OCI-LY7 (cell line): ENCODE measurements at regions of chr3 and their contacts with region 1.

Region 1: DNA sequence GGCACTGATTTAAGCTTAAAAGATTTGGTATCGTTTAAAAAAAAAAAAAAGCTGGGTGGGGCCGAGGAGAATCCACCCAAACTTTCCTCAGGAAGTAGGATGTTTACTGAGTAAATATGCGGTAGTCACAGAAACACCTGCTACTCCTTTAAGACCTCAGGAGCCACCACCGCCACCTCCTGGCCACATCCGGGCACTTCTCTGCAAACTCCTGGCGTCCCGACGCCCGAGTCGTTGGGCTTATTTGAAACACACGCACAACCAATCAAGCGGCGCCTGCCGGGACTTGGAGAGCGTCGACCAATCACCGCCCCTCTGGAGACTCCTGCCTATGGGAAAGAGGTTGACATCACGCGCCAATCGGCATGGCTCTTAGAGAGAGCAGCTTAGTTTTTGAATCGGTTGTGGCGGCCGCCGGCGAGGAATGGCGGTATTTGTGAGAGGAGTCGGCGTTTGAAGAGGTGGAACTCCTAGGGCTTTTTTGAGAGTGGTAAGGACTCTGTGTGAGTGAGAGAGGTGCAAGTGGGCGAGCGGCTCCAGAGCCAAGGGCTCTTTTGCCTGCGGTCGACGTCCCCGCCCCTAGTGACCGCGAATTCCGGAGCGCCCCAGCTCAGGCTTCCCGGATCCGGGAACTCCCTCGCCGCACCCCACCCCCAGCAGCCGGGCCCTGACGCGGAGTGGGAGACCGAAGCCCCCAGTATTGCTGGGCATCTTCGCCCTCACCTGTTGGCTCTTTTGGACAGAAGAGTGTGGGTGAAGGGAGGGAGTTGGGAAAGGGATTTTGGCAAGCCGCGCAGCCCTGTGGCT is at the start of gene ECT2:
- DNase-seq: peak; percentile 100
- H3K4me3 ChIP-seq: peak within 1 kb of the TSS; percentile 94
- H3K27ac ChIP-seq: peak within 1 kb of the TSS; percentile 82
- H3K4me1 ChIP-seq: peaks cover 24% of the 10 kb centered on the region
- CTCF ChIP-seq: peak; percentile 78
- total RNA-seq, gene ECT2: 48.1 and 51.5 TPM in 2 replicates

Region 2: DNA sequence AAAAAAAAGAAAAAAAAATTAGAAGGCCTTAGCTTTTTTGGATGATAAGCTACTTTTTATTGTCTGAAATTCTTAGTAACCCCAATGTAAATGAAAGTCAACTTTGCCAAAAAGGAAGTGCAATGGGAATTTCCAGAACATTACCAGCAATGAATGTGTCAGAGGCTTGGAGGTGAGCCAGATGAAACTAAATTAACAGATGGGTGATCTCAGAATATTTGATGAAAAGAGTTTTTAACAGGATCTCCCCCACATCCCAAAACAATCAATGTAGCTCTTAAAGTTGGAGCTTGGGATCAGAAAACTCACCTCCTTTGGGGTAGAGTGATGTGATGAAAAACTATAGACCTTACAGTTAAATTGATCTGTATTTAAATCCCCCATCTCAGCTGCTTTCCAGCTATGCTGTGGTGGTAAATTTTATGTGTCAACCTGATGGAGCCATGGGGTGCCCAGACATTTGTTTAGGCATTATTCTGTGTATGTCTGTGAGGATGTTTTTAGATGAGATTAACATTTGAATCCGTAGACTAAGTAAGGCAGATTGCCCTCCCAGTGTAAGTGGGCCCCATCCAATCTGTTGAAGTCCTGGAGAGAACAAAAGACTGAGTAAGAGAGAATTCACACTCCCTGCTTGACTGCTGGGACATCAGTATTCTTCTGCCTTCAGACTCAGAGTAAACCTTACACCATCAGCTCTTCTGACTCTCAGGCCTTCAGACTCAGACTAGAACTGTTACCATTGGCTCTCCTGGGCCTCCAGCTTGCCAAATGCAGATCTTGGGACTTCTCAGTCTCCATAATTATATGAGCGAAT is 143.1 kb before region 1 on chr3:
- CTCF ChIA-PET with region 1: no interaction called
- POLR2A ChIA-PET with region 1: no interaction called
- intact Hi-C with region 1: no loop called
- DNase-seq: no peak
- H3K4me3 ChIP-seq: no peak overlapping the region
- H3K27ac ChIP-seq: no peak overlapping the region
- H3K4me1 ChIP-seq: no peaks in the 10 kb centered on the region
- CTCF ChIP-seq: no peak

Region 3: GRCh38 chr3:172673210-172673679 is 77.3 kb before region 1 on chr3:
- CTCF ChIA-PET with region 1: no interaction called
- POLR2A ChIA-PET with region 1: interaction called, 5 read pairs
- intact Hi-C with region 1: loop called (anchors 1 kb)
- DNase-seq: peak; percentile 75
- H3K4me3 ChIP-seq: no peak overlapping the region
- H3K27ac ChIP-seq: no peak overlapping the region
- H3K4me1 ChIP-seq: no peaks in the 10 kb centered on the region
- CTCF ChIP-seq: peak; percentile 94

Region 4: DNA sequence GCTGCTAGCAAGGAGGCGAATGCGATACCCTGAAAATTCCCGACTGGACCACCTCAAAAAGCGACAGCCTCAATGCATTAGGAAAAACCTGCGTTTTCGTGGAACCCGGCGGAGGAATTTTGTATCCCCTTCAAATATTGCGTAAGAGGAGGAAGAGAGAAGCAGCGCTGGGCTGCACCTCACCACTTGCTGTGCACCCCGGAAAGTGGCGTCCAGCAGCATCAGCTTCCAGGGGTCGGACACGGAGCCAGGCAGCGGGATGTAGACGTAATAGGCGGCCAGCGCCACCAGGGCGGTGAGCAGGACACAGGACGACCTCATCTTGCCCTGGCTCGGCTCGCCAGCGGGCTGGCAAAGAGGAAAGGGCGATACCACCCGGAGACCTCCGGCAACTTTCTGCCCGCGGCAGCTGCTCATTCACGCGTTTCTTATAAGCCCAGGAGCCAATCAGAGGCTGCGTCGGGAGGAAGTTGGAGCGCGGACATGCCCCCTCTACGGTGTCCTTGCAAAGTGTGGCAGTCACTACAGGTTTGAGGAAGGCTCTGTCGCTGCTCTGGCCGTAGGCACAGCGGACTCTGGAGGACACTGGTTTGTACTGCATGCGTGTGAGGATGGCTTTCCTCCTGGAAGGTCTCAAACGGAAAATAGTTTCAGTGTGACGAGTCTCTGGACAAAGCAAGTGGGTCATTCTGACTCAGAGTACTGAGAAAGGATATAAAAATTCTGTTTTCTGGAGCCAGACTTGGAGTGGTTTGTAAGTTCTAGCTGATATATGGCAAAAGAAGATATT is 39.7 kb before region 1 on chr3 and contains the start of gene NCEH1:
- CTCF ChIA-PET with region 1: no interaction called
- POLR2A ChIA-PET with region 1: interaction called, 7 read pairs
- intact Hi-C with region 1: loop called (anchors 2 kb)
- DNase-seq: peak; percentile 96
- H3K4me3 ChIP-seq: peak within 1 kb of the TSS; percentile 88
- H3K27ac ChIP-seq: peak within 1 kb of the TSS; percentile 32
- H3K4me1 ChIP-seq: peaks cover 20% of the 10 kb centered on the region
- CTCF ChIP-seq: peak; percentile 83
- total RNA-seq, gene NCEH1: 2.3 and 2.7 TPM in 2 replicates

Region 5: DNA sequence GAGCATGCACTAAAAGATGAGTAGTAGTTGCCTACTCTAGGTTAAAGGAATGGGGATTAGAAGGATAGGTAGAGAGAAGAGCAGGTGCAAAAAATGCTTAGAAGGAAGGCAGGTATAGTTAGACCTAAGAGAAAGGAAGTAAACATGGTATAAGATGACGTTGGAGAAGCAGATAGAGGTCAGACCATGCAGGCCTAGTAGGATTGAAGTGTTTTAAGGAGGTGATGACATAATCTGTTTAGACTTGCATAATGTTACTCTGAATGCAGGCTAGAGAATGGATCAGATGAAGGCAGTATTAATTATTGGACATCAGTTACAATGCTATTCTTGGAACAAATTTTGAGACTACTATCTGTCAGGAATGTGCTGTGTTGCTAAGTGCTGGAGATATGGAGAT is 11.1 kb before region 1 on chr3:
- CTCF ChIA-PET with region 1: no interaction called
- POLR2A ChIA-PET with region 1: interaction called, 11 read pairs
- intact Hi-C with region 1: no loop called
- DNase-seq: no peak
- H3K4me3 ChIP-seq: no peak overlapping the region
- H3K27ac ChIP-seq: no peak overlapping the region
- H3K4me1 ChIP-seq: no peaks in the 10 kb centered on the region
- CTCF ChIP-seq: no peak

Region 6: GRCh38 chr3:172766241-172766640 is 15.7 kb after region 1 on chr3:
- CTCF ChIA-PET with region 1: interaction called, 3 read pairs
- POLR2A ChIA-PET with region 1: interaction called, 12 read pairs
- intact Hi-C with region 1: no loop called
- DNase-seq: no peak
- H3K4me3 ChIP-seq: no peak overlapping the region
- H3K27ac ChIP-seq: no peak overlapping the region
- H3K4me1 ChIP-seq: no peaks in the 10 kb centered on the region
- CTCF ChIP-seq: no peak

Region 7: DNA sequence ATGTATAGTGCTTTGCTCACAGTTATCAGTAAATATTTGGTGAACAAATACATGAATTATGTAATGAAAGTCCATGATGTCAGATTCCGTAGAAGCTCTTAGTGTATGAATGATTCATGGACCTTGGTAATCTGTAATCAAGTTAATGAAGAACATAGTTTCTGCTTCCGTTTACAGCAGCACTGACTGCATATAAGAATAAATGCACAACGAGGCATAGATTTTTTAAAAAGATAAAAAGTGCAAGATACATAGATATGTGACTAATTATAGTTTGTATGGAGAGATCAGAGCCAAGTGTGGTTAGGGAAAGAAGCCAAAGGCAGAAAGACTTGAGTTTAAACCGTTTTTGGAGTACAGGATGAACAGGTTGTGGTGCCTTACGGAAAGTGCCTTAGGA is 940.0 kb after region 1 on chr3:
- CTCF ChIA-PET with region 1: no interaction called
- POLR2A ChIA-PET with region 1: no interaction called
- intact Hi-C with region 1: no loop called
- DNase-seq: no peak
- H3K4me3 ChIP-seq: no peak overlapping the region
- H3K27ac ChIP-seq: no peak overlapping the region
- H3K4me1 ChIP-seq: no peaks in the 10 kb centered on the region
- CTCF ChIP-seq: no peak